PC-3 (cell line): ENCODE measurements at regions of chr12 and their contacts with region 1.

Region 1: GRCh38 chr12:55336002-55336401 is 5.5 kb downstream of the OR6C3 start:
- DNase-seq: no peak
- ATAC-seq: no peak
- H3K4me3 ChIP-seq: no peak overlapping the region
- H3K27ac ChIP-seq: no peak overlapping the region
- H3K4me1 ChIP-seq: no peaks in the 10 kb centered on the region
- H3K27me3 ChIP-seq: peaks cover 55% of the 10 kb centered on the region
- CTCF ChIP-seq: no peak

Region 2: DNA sequence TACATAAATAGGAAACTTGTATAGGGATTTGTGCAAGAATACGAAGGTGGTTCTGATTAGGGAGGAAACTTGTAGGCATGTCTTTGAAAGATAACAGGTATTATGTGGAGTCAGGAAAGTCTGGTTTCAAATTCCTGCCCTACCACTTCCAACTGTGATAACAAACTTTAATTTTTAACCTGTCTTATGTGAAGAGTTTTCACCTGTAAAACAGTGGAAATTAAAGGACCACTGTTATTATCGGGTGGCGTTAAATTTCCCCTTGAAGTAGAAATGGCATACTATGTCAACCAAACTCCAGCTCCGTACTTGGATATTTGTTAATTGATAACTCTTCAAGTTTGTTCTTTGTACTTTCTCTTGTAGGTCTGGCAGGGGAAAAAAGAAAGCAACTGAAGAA is 15.8 kb before region 1 on chr12:
- CTCF ChIA-PET with region 1: no interaction called
- POLR2A ChIA-PET with region 1: interaction called, 25 read pairs
- intact Hi-C with region 1: no loop called
- DNase-seq: no peak
- ATAC-seq: no peak
- H3K4me3 ChIP-seq: no peak overlapping the region
- H3K27ac ChIP-seq: no peak overlapping the region
- H3K4me1 ChIP-seq: no peaks in the 10 kb centered on the region
- H3K27me3 ChIP-seq: no peaks in the 10 kb centered on the region; the same call in 1 of the 2 replicates
- CTCF ChIP-seq: no peak